ENCODE measurements at regions of chr12 and their contacts with region 1.

Region 1: DNA sequence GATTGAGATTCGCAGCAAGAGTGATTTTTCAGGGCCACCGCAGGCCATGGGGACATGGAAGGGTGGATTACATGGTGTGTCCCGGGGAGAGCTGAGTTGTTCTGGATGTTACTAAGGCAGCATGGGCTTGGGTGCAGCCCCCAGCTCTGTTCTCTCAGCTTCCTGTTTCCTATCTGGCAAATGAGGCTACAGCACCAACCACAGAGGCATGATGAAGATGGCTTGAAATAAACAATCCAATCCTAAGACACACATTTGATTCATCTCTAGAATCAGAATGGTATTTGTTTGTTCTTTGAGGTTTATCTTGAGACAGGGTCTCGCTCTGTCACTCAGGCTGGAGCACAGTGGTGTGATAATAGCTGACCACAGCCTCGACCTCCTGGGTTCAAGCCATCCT is 21.6 kb downstream of the GLTP start:
- DNase-seq: no peak
- ATAC-seq: no peak
- H3K4me3 ChIP-seq: no peak overlapping the region
- H3K27ac ChIP-seq: no peak overlapping the region
- H3K4me1 ChIP-seq: peaks cover 43% of the 10 kb centered on the region
- H3K27me3 ChIP-seq: no peaks in the 10 kb centered on the region
- CTCF ChIP-seq: no peak
- EP300 ChIP-seq: no peak
- POLR2A ChIP-seq: no peak
- RAD21 ChIP-seq: no peak

Region 2: DNA sequence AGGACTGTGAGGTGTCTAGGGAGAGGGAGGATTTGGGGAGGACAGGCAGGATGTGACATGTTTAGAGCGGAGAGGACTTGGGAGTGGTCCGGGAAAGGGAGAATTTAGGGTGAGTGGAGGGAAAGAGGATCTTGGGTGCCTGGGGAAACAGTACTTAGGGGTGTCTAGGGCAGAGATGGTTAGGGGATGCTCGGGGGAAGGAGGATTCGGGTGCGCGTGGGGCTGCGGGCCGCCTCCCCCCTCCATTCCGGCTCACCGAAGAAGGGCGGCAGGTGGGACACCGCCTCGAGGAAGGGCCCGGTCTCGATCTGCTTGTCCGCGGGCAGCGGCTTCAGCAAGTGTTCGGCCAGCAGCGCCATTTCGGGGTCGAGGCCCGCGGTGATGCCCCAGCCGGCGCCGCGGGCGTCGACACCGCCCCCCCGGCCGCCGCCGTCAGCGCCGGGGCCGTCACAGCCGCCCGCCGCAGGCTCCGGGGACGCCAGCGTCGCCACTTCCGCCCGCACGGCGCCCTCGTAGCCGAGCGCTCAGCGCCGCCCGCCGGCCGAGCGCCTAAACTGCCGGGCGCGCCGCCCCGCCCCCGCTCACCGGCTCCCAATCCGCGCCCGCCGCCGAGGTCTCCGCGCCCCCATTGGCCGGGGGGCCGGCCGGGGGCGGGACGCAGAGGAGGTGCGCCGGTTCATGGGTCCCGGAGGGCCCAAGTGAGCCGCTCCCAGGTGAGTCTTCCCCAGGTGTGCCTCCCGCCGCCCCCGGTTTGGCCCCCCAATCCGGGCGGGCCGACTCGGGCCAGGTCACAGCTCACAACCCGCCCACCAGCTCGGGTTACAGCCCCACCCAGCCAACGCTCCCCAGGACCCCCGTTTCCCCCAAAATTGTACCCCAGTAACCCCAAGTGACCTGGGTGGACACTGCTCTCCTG is 21.5 kb after region 1 on chr12 and contains the start of gene GLTP:
- CTCF ChIA-PET with region 1: interaction called, 32 read pairs
- POLR2A ChIA-PET with region 1: interaction called, 11 read pairs
- in situ Hi-C with region 1: no loop called
- intact Hi-C with region 1: loop called (anchors 1 kb)
- DNase-seq: peak; percentile 58
- ATAC-seq: peak; percentile 93
- H3K4me3 ChIP-seq: peak within 1 kb of the TSS; percentile 73 to 92 (median 80)
- H3K27ac ChIP-seq: no peak within 1 kb of the TSS
- H3K4me1 ChIP-seq: peaks cover 58% of the 10 kb centered on the region
- H3K27me3 ChIP-seq: peaks cover 0 to 9% of the 10 kb centered on the region in 2 experiments; a peak in 2 of 5 replicates
- CTCF ChIP-seq: peak; percentile 59; the same call in 1 of the 2 replicates
- EP300 ChIP-seq: no peak
- POLR2A ChIP-seq: peak in 1 of 2 experiments; percentile 32; a peak in 1 of 4 replicates
- RAD21 ChIP-seq: peak; percentile 100
- total RNA-seq, gene GLTP: 12.9 and 13.0 TPM in 2 replicates

Region 3: GRCh38 chr12:109927622-109928021 is 68.9 kb after region 1 on chr12:
- CTCF ChIA-PET with region 1: interaction called, 10 read pairs
- POLR2A ChIA-PET with region 1: no interaction called
- in situ Hi-C with region 1: no loop called
- intact Hi-C with region 1: loop called (anchors 5 kb)
- DNase-seq: peak; percentile 44
- ATAC-seq: peak; percentile 78
- H3K4me3 ChIP-seq: no peak overlapping the region
- H3K27ac ChIP-seq: no peak overlapping the region
- H3K4me1 ChIP-seq: peaks cover 25% of the 10 kb centered on the region
- H3K27me3 ChIP-seq: no peaks in the 10 kb centered on the region
- CTCF ChIP-seq: peak; percentile 78
- EP300 ChIP-seq: no peak
- POLR2A ChIP-seq: no peak
- RAD21 ChIP-seq: 0 out of 2 replicates have a peak, but pooled peaks have one; percentile 21